ENCODE measurements at regions of chr17 and their contacts with region 1.

Region 1: DNA sequence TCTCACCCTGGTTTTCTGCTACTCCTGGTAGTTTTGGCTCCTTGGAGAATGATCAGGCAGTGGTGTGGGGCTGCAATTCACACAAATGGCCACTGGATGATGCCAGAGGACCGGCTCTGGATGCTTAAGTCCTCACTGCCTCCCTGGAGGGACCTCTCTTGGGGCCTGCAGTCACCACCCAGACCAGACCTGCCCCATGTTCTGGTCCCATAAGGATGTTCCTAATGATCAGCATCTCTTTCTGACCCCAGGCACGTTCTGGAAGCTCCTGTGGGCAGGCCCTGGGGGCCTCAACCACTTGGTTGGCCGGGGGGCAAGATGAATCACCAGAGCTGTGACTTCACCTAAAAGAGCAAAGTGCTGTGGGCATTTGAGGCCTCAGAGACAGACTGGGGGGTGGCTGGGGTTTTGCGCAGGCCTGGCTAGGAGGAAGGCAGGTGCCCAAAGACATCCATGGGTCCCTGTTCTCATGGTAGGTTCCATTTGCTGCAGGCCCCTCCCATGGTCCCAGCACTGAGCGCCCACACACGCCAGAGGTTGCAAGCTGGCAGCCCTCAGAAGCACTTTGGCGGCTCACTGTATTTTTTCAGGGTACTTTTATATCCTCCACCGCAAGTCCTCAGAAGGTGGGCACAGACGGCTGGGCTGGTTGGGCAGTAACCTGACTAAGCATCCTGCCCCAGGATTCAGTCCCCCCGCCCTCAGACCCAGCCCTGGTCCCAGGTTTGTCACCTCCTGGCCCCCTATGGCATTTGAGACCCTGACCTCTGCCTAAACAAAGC is 53.2 kb downstream of the NT5M start:
- DNase-seq: peak; percentile 79
- ATAC-seq: peak; percentile 87
- H3K4me3 ChIP-seq: no peak overlapping the region
- H3K4me3 Mint-ChIP-seq: no peak overlapping the region
- H3K27ac ChIP-seq: no peak overlapping the region
- H3K27ac Mint-ChIP-seq: no peak overlapping the region
- H3K4me1 ChIP-seq: peaks cover 3 to 7% of the 10 kb centered on the region in 2 donors
- H3K4me1 Mint-ChIP-seq: peaks cover 4% of the 10 kb centered on the region
- H3K27me3 ChIP-seq: no peaks in the 10 kb centered on the region
- H3K27me3 Mint-ChIP-seq: peaks cover 4% of the 10 kb centered on the region
- CTCF ChIP-seq: peak; percentile 93

Region 2: DNA sequence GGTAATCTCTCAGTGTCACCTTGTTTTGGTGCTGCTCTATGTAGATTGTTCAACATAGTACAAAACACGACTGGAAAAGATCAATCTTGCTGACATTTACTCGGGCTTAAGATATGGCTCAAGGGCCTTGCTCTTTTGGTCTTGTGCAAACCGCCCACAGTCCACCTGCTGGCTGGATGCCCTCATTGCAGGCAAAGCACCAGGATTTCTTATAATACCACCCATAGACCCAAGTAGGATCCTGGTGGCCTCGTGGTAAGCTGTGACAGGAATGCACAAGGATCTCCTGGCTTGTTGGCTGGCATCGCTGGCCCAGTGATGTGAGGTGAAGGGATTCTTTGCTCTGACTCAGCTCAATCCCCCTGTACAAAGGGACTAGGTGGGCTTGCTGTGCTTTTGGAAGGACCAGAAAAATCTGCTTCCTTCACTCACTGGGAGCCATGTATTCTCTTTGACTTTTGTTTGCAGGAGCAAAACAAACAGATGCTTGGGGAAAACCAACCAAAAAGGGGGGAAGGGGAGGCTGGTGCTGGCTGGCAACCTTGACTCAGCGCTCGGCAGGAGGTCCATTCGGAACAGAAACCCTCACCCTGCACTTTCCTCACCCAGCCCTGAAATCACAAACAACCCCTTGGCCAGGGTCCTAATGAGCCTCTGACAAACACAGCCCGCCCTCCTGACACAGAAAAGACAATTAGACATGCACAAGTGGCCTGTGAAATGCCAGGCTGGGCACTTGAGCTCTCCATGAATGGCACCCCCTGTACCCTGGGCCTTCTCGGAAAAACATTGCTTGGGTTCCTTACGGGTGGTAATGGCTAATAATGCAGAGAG is 83.9 kb after region 1 on chr17:
- CTCF ChIA-PET with region 1: interaction called, 23 read pairs
- POLR2A ChIA-PET with region 1: interaction called, 3 read pairs
- intact Hi-C with region 1: loop called (anchors 2 kb)
- DNase-seq: peak; percentile 80
- ATAC-seq: peak; percentile 85
- H3K4me3 ChIP-seq: no peak overlapping the region
- H3K4me3 Mint-ChIP-seq: no peak overlapping the region
- H3K27ac ChIP-seq: no peak overlapping the region
- H3K27ac Mint-ChIP-seq: no peak overlapping the region
- H3K4me1 ChIP-seq: peaks cover 0 to 3% of the 10 kb centered on the region in 2 donors
- H3K4me1 Mint-ChIP-seq: peaks cover 2% of the 10 kb centered on the region
- H3K27me3 ChIP-seq: no peaks in the 10 kb centered on the region
- H3K27me3 Mint-ChIP-seq: peaks cover 4% of the 10 kb centered on the region
- CTCF ChIP-seq: peak; percentile 82

Region 3: GRCh38 chr17:17447182-17447652 is 90.9 kb after region 1 on chr17:
- CTCF ChIA-PET with region 1: interaction called, 12 read pairs
- POLR2A ChIA-PET with region 1: interaction called, 3 read pairs
- intact Hi-C with region 1: no loop called
- DNase-seq: no peak
- ATAC-seq: no peak
- H3K4me3 ChIP-seq: no peak overlapping the region
- H3K4me3 Mint-ChIP-seq: no peak overlapping the region
- H3K27ac ChIP-seq: no peak overlapping the region
- H3K27ac Mint-ChIP-seq: no peak overlapping the region
- H3K4me1 ChIP-seq: no peaks in the 10 kb centered on the region
- H3K4me1 Mint-ChIP-seq: no peaks in the 10 kb centered on the region
- H3K27me3 ChIP-seq: peaks cover 0 to 6% (median 1%) of the 10 kb centered on the region in 4 experiments
- H3K27me3 Mint-ChIP-seq: peaks cover 17% of the 10 kb centered on the region
- CTCF ChIP-seq: no peak

Region 4: GRCh38 chr17:17467016-17467415 is 110.7 kb after region 1 on chr17:
- CTCF ChIA-PET with region 1: no interaction called
- POLR2A ChIA-PET with region 1: no interaction called
- intact Hi-C with region 1: no loop called
- DNase-seq: no peak
- ATAC-seq: no peak
- H3K4me3 ChIP-seq: no peak overlapping the region
- H3K4me3 Mint-ChIP-seq: no peak overlapping the region
- H3K27ac ChIP-seq: no peak overlapping the region
- H3K27ac Mint-ChIP-seq: no peak overlapping the region
- H3K4me1 ChIP-seq: no peaks in the 10 kb centered on the region
- H3K4me1 Mint-ChIP-seq: no peaks in the 10 kb centered on the region
- H3K27me3 ChIP-seq: no peaks in the 10 kb centered on the region
- H3K27me3 Mint-ChIP-seq: peaks cover 36% of the 10 kb centered on the region
- CTCF ChIP-seq: no peak

Region 5: GRCh38 chr17:17613708-17614114 is 257.4 kb after region 1 on chr17:
- CTCF ChIA-PET with region 1: interaction called, 12 read pairs
- POLR2A ChIA-PET with region 1: no interaction called
- intact Hi-C with region 1: no loop called
- DNase-seq: peak; percentile 57
- ATAC-seq: peak; percentile 66
- H3K4me3 ChIP-seq: no peak overlapping the region
- H3K4me3 Mint-ChIP-seq: no peak overlapping the region
- H3K27ac ChIP-seq: no peak overlapping the region
- H3K27ac Mint-ChIP-seq: no peak overlapping the region
- H3K4me1 ChIP-seq: peaks cover 0 to 4% of the 10 kb centered on the region in 2 donors
- H3K4me1 Mint-ChIP-seq: no peaks in the 10 kb centered on the region
- H3K27me3 ChIP-seq: no peaks in the 10 kb centered on the region
- H3K27me3 Mint-ChIP-seq: no peaks in the 10 kb centered on the region
- CTCF ChIP-seq: peak; percentile 79

Region 6: GRCh38 chr17:17919169-17920107 is 563.1 kb after region 1 on chr17:
- CTCF ChIA-PET with region 1: interaction called, 6 read pairs
- POLR2A ChIA-PET with region 1: no interaction called
- intact Hi-C with region 1: loop called (anchors 5 kb)
- DNase-seq: peak; percentile 67
- ATAC-seq: peak; percentile 69
- H3K4me3 ChIP-seq: no peak overlapping the region
- H3K4me3 Mint-ChIP-seq: no peak overlapping the region
- H3K27ac ChIP-seq: no peak overlapping the region
- H3K27ac Mint-ChIP-seq: no peak overlapping the region
- H3K4me1 ChIP-seq: no peaks in the 10 kb centered on the region
- H3K4me1 Mint-ChIP-seq: no peaks in the 10 kb centered on the region
- H3K27me3 ChIP-seq: no peaks in the 10 kb centered on the region
- H3K27me3 Mint-ChIP-seq: no peaks in the 10 kb centered on the region
- CTCF ChIP-seq: peak; percentile 71

Measured in B cell (primary cell).